SK-N-SH (cell line): ENCODE measurements at regions of chr20 and their contacts with region 1.

Region 1: GRCh38 chr20:645318-646106 is 7.5 kb downstream of the SRXN1 start:
- DNase-seq: peak; percentile 92
- H3K4me3 ChIP-seq: no peak overlapping the region; a peak in 1 of 4 replicates
- H3K27ac ChIP-seq: no peak overlapping the region; a peak in 1 of 4 replicates
- H3K4me1 ChIP-seq: peaks cover 0 to 3% of the 10 kb centered on the region in 2 experiments; a peak in 1 of 4 replicates
- H3K27me3 ChIP-seq: no peaks in the 10 kb centered on the region
- CTCF ChIP-seq: peak; percentile 94
- EP300 ChIP-seq: no peak
- RAD21 ChIP-seq: peak; percentile 88

Region 2: GRCh38 chr20:531608-532007 is 113.9 kb before region 1 on chr20:
- CTCF ChIA-PET with region 1: no interaction called
- POLR2A ChIA-PET with region 1: no interaction called
- DNase-seq: no peak
- H3K4me3 ChIP-seq: no peak overlapping the region
- H3K27ac ChIP-seq: no peak overlapping the region
- H3K4me1 ChIP-seq: peaks cover under 1 to 7% of the 10 kb centered on the region in 2 experiments; a peak in 2 of 4 replicates
- H3K27me3 ChIP-seq: no peaks in the 10 kb centered on the region
- CTCF ChIP-seq: no peak
- EP300 ChIP-seq: no peak
- RAD21 ChIP-seq: no peak

Region 3: GRCh38 chr20:577167-577791 is 68.2 kb before region 1 on chr20:
- CTCF ChIA-PET with region 1: interaction called, 22 read pairs
- POLR2A ChIA-PET with region 1: no interaction called
- DNase-seq: no peak
- H3K4me3 ChIP-seq: no peak overlapping the region
- H3K27ac ChIP-seq: no peak overlapping the region
- H3K4me1 ChIP-seq: no peaks in the 10 kb centered on the region; a peak in 1 of 4 replicates
- H3K27me3 ChIP-seq: peaks cover 17% of the 10 kb centered on the region; the same call in 1 of the 2 replicates
- CTCF ChIP-seq: peak; percentile 27; the same call in 1 of the 2 replicates
- EP300 ChIP-seq: no peak
- RAD21 ChIP-seq: no peak

Region 4: DNA sequence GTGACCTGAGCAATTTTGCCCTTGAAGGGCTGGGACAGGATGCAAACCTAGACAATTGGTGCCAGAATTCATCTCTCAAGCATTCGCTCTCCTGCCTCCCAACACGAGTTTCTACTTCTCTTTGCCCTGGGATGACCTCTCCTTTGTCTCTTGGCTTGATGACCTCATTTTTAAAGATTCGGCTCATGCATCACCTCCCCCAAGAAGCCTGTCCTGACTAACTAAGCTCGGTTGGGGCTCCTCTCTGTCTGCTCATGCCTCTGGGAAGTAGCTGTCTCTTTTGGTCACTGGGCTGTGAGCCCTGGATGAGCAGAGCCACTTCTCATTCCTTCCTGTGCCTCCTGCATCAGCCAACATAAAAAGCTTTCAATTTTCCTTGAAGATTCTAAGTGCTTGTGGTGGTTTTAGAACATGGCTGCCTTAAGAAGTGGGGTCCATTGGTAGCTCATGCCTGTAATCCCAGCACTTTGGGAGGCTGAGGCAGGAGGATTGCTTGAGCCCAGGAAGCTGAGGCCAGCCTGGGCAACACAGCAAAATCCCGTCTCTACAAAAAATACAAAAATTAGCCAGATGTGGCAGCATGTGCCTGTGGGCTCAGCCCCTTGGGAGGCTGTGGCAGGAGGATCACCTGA is 24.3 kb before region 1 on chr20:
- CTCF ChIA-PET with region 1: interaction called, 23 read pairs
- POLR2A ChIA-PET with region 1: no interaction called
- DNase-seq: no peak
- H3K4me3 ChIP-seq: no peak overlapping the region
- H3K27ac ChIP-seq: no peak overlapping the region
- H3K4me1 ChIP-seq: no peaks in the 10 kb centered on the region
- H3K27me3 ChIP-seq: no peaks in the 10 kb centered on the region; the same call in 1 of the 2 replicates
- CTCF ChIP-seq: no peak
- EP300 ChIP-seq: no peak
- RAD21 ChIP-seq: no peak

Region 5: GRCh38 chr20:675453-676314 is 30.2 kb after region 1 on chr20 and contains the start of gene SCRT2:
- CTCF ChIA-PET with region 1: interaction called, 16 read pairs
- POLR2A ChIA-PET with region 1: no interaction called
- DNase-seq: peak; percentile 81
- H3K4me3 ChIP-seq: peak within 1 kb of the TSS; percentile 26 to 46
- H3K27ac ChIP-seq: peak within 1 kb of the TSS in 1 of 2 experiments; percentile 74; a peak in 2 of 4 replicates
- H3K4me1 ChIP-seq: peaks cover 0 to 10% of the 10 kb centered on the region in 2 experiments; a peak in 1 of 4 replicates
- H3K27me3 ChIP-seq: peaks cover 24% of the 10 kb centered on the region; the same call in 1 of the 2 replicates
- CTCF ChIP-seq: no peak
- EP300 ChIP-seq: no peak
- RAD21 ChIP-seq: no peak
- polyA plus RNA-seq, gene SCRT2: not detected in 2 replicates

Region 6: DNA sequence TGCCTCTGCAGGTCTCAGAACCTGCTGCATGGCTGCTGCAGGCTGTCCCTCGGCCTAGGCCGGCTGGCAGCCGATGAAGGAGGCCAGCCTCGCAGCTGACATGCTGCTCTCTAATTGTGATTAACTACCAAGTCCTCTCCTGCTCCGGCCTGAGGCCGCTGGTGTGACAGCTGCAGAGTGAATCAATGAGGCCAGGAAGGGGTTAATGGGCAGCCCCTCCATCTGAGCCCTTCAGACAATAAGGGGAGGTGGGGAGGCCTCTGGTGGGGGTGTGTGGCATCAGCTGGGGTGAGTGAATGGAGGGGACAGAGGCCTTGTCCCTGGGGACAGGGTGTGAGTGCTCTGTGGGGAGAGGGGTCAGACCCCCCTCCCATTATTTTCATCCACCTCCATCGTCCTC is 88.3 kb after region 1 on chr20:
- CTCF ChIA-PET with region 1: interaction called, 62 read pairs
- POLR2A ChIA-PET with region 1: no interaction called
- DNase-seq: peak; percentile 41
- H3K4me3 ChIP-seq: no peak overlapping the region
- H3K27ac ChIP-seq: no peak overlapping the region
- H3K4me1 ChIP-seq: no peaks in the 10 kb centered on the region; a peak in 1 of 4 replicates
- H3K27me3 ChIP-seq: peaks cover 5% of the 10 kb centered on the region; the same call in 1 of the 2 replicates
- CTCF ChIP-seq: no peak
- EP300 ChIP-seq: no peak
- RAD21 ChIP-seq: no peak

Region 7: GRCh38 chr20:833450-834150 is 188.1 kb after region 1 on chr20 and contains the start of gene FAM110A:
- CTCF ChIA-PET with region 1: no interaction called
- POLR2A ChIA-PET with region 1: no interaction called
- DNase-seq: peak; percentile 95
- H3K4me3 ChIP-seq: peak within 1 kb of the TSS; percentile 67 to 85
- H3K27ac ChIP-seq: peak within 1 kb of the TSS; percentile 88 to 92
- H3K4me1 ChIP-seq: peaks cover 6 to 12% of the 10 kb centered on the region in 2 experiments; a peak in 2 of 4 replicates
- H3K27me3 ChIP-seq: no peaks in the 10 kb centered on the region
- CTCF ChIP-seq: no peak
- EP300 ChIP-seq: no peak
- RAD21 ChIP-seq: no peak
- polyA plus RNA-seq, gene FAM110A: 2.5 and 3.8 TPM in 2 replicates

Region 8: DNA sequence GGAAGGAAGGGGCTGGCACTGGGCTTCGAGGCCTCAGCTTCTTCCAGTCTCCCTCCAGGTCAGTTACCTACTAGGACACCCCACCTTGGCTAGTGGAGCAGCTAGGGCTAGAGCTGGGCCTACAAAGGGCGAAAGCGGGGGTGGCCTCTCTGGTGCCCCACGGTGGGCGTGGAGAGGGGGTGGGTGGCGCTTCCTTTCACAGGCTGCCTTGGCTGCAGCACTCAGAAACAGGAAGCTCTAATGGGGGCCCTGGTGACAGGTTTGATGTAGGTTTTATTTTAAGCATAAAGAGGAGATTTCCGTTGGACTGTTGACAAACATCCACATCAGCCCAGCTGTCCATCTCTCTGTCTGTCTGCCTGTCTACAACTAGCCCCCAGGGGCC is 201.4 kb after region 1 on chr20:
- CTCF ChIA-PET with region 1: no interaction called
- POLR2A ChIA-PET with region 1: no interaction called
- DNase-seq: no peak
- H3K4me3 ChIP-seq: no peak overlapping the region
- H3K27ac ChIP-seq: no peak overlapping the region; a peak in 1 of 4 replicates
- H3K4me1 ChIP-seq: peaks cover 0 to 48% of the 10 kb centered on the region in 2 experiments; a peak in 1 of 4 replicates
- H3K27me3 ChIP-seq: no peaks in the 10 kb centered on the region
- CTCF ChIP-seq: no peak
- EP300 ChIP-seq: no peak
- RAD21 ChIP-seq: no peak

Region 9: DNA sequence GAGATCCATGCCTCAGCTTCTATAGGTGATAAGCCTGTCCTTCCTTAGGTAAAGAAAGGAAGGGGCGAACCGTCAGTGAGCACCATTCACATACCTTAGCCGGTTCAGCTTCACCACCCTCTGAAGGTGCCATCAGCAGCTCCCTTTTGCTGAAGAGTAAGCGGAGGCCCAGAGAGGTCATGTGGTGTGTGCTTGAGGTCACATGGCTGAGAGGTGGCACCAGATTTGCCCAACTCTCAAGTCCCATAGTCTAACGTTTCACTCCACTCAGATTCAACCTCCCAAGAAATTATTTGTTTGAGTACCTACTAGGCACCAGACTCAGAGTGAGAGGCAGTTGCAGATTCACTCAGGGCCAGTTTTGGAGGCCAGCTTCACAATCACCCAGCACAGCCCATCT is 375.1 kb after region 1 on chr20:
- CTCF ChIA-PET with region 1: no interaction called
- POLR2A ChIA-PET with region 1: no interaction called
- DNase-seq: no peak
- H3K4me3 ChIP-seq: no peak overlapping the region
- H3K27ac ChIP-seq: no peak overlapping the region
- H3K4me1 ChIP-seq: no peaks in the 10 kb centered on the region
- H3K27me3 ChIP-seq: no peaks in the 10 kb centered on the region; the same call in 1 of the 2 replicates
- CTCF ChIP-seq: no peak
- EP300 ChIP-seq: no peak
- RAD21 ChIP-seq: no peak